Heart right ventricle (tissue), 16 donors: ENCODE measurements at regions of chr2 and their contacts with region 1.

Region 1: GRCh38 chr2:128473175-128474035 is 154.7 kb upstream of the HS6ST1 start:
- DNase-seq: no peak
- ATAC-seq: peak; percentile 44 to 82 (median 68)
- H3K4me3 ChIP-seq: peak overlapping the region in 7 of 10 donors; percentile 6 to 34 (median 31)
- H3K27ac ChIP-seq: peak overlapping the region in 1 of 10 donors; percentile 13
- H3K4me1 ChIP-seq: peaks cover 0 to 20% (median 14%) of the 10 kb centered on the region in 9 donors
- H3K27me3 ChIP-seq: peaks cover 0 to 10% (median 0%) of the 10 kb centered on the region in 7 donors
- CTCF ChIP-seq: no peak

Region 2: GRCh38 chr2:127790694-127791529 is 682.5 kb before region 1 on chr2:
- intact Hi-C with region 1: no loop called
- DNase-seq: no peak
- ATAC-seq: peak in 1 of 8 donors; percentile 41
- H3K4me3 ChIP-seq: no peak overlapping the region
- H3K27ac ChIP-seq: no peak overlapping the region
- H3K4me1 ChIP-seq: peaks cover 0 to 33% (median 14%) of the 10 kb centered on the region in 9 donors
- H3K27me3 ChIP-seq: no peaks in the 10 kb centered on the region
- CTCF ChIP-seq: no peak

Region 3: GRCh38 chr2:128215897-128216642 is 257.3 kb before region 1 on chr2:
- intact Hi-C with region 1: no loop called
- DNase-seq: no peak
- ATAC-seq: no peak
- H3K4me3 ChIP-seq: no peak overlapping the region
- H3K27ac ChIP-seq: no peak overlapping the region
- H3K4me1 ChIP-seq: no peaks in the 10 kb centered on the region
- H3K27me3 ChIP-seq: no peaks in the 10 kb centered on the region
- CTCF ChIP-seq: no peak

Region 4: GRCh38 chr2:128494640-128495321 is 21.4 kb after region 1 on chr2:
- intact Hi-C with region 1: loop called in 1 of 10 experiments (anchors 2 kb)
- DNase-seq: peak in 1 of 2 donors; percentile 61
- ATAC-seq: peak; percentile 60 to 94 (median 88)
- H3K4me3 ChIP-seq: no peak overlapping the region
- H3K27ac ChIP-seq: peak overlapping the region; percentile 23 to 80 (median 60)
- H3K4me1 ChIP-seq: peaks cover 0 to 28% (median 17%) of the 10 kb centered on the region in 9 donors
- H3K27me3 ChIP-seq: peaks cover 0 to 13% (median 0%) of the 10 kb centered on the region in 7 donors
- CTCF ChIP-seq: no peak

Region 5: GRCh38 chr2:128593879-128594650 is 120.7 kb after region 1 on chr2:
- intact Hi-C with region 1: no loop called
- DNase-seq: peak; percentile 23 to 27
- ATAC-seq: peak; percentile 39 to 79 (median 74)
- H3K4me3 ChIP-seq: no peak overlapping the region
- H3K27ac ChIP-seq: peak overlapping the region in 3 of 10 donors; percentile 29 to 43 (median 40)
- H3K4me1 ChIP-seq: peaks cover 0 to 30% (median 14%) of the 10 kb centered on the region in 9 donors
- H3K27me3 ChIP-seq: peaks cover 0 to 3% (median 0%) of the 10 kb centered on the region in 7 donors
- CTCF ChIP-seq: no peak